ENCODE measurements at regions of chr9 and their contacts with region 1.

Region 1: GRCh38 chr9:130884980-130885696 is 11.5 kb downstream of the QRFP start:
- DNase-seq: peak in 2 of 4 experiments; percentile 53 to 54
- ATAC-seq: no peak; the same call in 2 of the 3 replicates
- H3K4me3 ChIP-seq: no peak overlapping the region
- H3K27ac ChIP-seq: no peak overlapping the region
- H3K4me1 ChIP-seq: peaks cover 0 to 40% of the 10 kb centered on the region in 2 experiments; a peak in 1 of 5 replicates
- H3K27me3 ChIP-seq: no peaks in the 10 kb centered on the region
- CTCF ChIP-seq: no peak
- EP300 ChIP-seq: no peak
- POLR2A ChIP-seq: no peak
- RAD21 ChIP-seq: no peak

Region 2: DNA sequence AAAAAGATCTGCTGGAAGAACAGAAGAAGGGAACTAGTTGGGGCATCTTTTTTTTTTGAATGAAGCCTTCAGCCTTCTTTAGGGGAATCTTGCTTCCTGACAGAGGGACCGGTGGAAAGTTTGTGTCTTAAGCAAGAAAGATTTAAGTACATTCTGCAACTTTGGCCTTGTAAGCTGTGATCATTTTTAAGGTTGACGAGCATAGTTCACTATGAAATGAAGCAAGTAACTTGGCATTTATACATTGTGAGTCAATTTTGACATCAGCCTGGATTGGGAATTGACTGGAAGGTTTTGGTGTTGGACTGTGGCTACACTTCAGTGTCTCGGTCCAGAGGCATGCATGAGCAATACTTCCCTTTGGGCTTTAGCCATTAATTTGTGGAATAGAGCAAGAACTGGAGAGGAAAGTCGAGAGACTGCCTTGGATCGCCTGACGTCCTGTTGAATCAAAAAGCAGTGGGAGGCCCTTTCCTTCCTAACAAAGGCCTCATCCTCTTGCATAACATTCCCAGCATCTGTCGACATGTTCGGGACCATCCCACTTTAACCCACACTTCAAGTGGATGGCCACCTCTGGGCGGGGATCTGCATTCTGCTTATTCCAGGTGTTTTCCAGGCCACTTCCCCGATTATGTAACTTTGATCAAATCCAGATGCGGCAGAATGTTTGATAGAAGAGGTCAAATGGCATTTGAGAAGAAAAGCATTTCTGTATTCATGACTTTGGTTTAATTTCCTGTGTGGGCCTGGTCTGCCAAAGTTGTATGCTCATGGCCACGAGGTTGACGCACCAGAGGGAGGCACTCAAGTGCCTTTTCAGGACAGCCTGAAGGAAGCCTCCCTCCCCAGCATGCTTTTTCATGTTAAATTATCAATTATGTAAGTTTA is 37.6 kb before region 1 on chr9:
- CTCF ChIA-PET with region 1: no interaction called
- POLR2A ChIA-PET with region 1: interaction called, 13 read pairs
- in situ Hi-C with region 1: no loop called
- intact Hi-C with region 1: no loop called
- DNase-seq: peak in 1 of 4 experiments; percentile 66
- ATAC-seq: no peak
- H3K4me3 ChIP-seq: no peak overlapping the region
- H3K27ac ChIP-seq: no peak overlapping the region
- H3K4me1 ChIP-seq: peaks cover 26 to 29% of the 10 kb centered on the region in 2 experiments
- H3K27me3 ChIP-seq: no peaks in the 10 kb centered on the region
- CTCF ChIP-seq: no peak
- EP300 ChIP-seq: no peak
- POLR2A ChIP-seq: no peak
- RAD21 ChIP-seq: no peak

Region 3: GRCh38 chr9:130901498-130902203 is 16.5 kb after region 1 on chr9:
- CTCF ChIA-PET with region 1: no interaction called
- POLR2A ChIA-PET with region 1: interaction called, 334 read pairs
- in situ Hi-C with region 1: no loop called
- intact Hi-C with region 1: no loop called
- DNase-seq: peak in 3 of 4 experiments; percentile 54 to 65 (median 60)
- ATAC-seq: no peak
- H3K4me3 ChIP-seq: no peak overlapping the region
- H3K27ac ChIP-seq: no peak overlapping the region
- H3K4me1 ChIP-seq: peaks cover 0 to 74% of the 10 kb centered on the region in 2 experiments; a peak in 2 of 5 replicates
- H3K27me3 ChIP-seq: peaks cover 87 to 95% of the 10 kb centered on the region in 2 experiments
- CTCF ChIP-seq: no peak
- EP300 ChIP-seq: no peak
- POLR2A ChIP-seq: no peak
- RAD21 ChIP-seq: no peak

Region 4: GRCh38 chr9:130918870-130919558 is 33.9 kb after region 1 on chr9:
- CTCF ChIA-PET with region 1: no interaction called
- POLR2A ChIA-PET with region 1: interaction called, 334 read pairs
- in situ Hi-C with region 1: no loop called
- intact Hi-C with region 1: no loop called
- DNase-seq: peak in 2 of 4 experiments; percentile 67 to 70
- ATAC-seq: no peak
- H3K4me3 ChIP-seq: no peak overlapping the region
- H3K27ac ChIP-seq: no peak overlapping the region
- H3K4me1 ChIP-seq: peaks cover 0 to 58% of the 10 kb centered on the region in 2 experiments; a peak in 2 of 5 replicates
- H3K27me3 ChIP-seq: peaks cover 97 to 100% of the 10 kb centered on the region in 2 experiments
- CTCF ChIP-seq: no peak
- EP300 ChIP-seq: no peak
- POLR2A ChIP-seq: no peak
- RAD21 ChIP-seq: no peak